ENCODE measurements at regions of chr2 and their contacts with region 1.

Region 1: GRCh38 chr2:177263451-177264208 is 897 bp downstream of the NFE2L2 start:
- DNase-seq: peak; percentile 99
- H3K4me3 ChIP-seq: peak overlapping the region; percentile 86 to 100 (median 95)
- H3K27ac ChIP-seq: peak overlapping the region; percentile 91
- H3K4me1 ChIP-seq: peaks cover 28% of the 10 kb centered on the region
- H3K27me3 ChIP-seq: no peaks in the 10 kb centered on the region
- CTCF ChIP-seq: peak; percentile 61 to 92

Region 2: GRCh38 chr2:177229448-177230242 is 34.0 kb before region 1 on chr2:
- CTCF ChIA-PET with region 1: no interaction called
- dilution Hi-C with region 1: no loop called
- in situ Hi-C with region 1: no loop called
- intact Hi-C with region 1: loop called (anchors 2 kb)
- DNase-seq: peak; percentile 81
- H3K4me3 ChIP-seq: no peak overlapping the region
- H3K27ac ChIP-seq: peak overlapping the region; percentile 54
- H3K4me1 ChIP-seq: peaks cover 6% of the 10 kb centered on the region
- H3K27me3 ChIP-seq: no peaks in the 10 kb centered on the region
- CTCF ChIP-seq: no peak

Region 3: DNA sequence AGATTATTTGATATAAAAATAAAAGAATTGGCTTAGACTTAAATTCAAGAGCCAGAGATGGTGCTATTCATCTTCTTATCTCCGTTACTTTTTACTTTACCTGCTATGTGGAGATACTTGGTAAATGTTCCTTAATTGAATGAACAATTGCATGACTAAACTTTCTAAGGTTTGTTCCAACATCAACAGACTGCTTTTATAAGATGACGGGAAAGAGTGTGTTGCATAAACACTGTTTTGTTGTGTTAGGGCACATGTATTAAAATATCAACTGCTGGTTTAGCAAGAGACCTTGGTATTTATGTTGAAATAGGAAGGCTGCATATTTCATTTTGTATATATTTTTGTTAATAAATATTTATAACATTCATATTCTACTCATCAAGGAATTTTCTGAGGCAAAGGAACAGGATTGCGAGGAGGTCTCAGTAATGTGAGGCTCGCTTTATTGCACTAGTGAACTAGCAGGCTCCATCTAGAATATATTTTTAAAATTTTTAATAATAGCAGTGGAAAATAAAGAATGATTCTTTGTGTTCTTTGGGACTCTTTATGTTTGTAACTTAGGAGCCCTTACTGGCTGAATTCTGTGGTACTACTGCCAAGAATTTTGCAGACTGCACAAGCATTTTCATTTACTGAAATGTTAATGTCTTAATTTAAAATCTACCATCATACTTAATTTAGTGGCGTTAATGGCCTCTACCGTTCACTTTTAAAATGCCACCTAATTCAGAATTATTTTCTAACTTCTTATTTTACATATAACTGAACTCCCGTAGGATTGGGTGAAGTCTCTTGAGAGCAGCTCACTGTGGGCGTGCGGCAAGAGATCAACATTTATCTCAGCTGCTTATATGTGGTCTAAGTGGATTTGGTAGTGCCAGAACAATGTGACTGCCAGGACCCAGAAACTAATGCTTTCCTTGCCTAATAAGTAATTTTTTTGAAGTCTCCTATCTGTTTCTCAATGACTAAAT is 11.7 kb after region 1 on chr2:
- CTCF ChIA-PET with region 1: no interaction called
- dilution Hi-C with region 1: no loop called
- in situ Hi-C with region 1: no loop called
- intact Hi-C with region 1: loop called (anchors 1 kb)
- DNase-seq: peak; percentile 87
- H3K4me3 ChIP-seq: peak overlapping the region in 1 of 3 experiments; percentile 36
- H3K27ac ChIP-seq: peak overlapping the region; percentile 36
- H3K4me1 ChIP-seq: peaks cover 10% of the 10 kb centered on the region
- H3K27me3 ChIP-seq: no peaks in the 10 kb centered on the region
- CTCF ChIP-seq: no peak

Region 4: DNA sequence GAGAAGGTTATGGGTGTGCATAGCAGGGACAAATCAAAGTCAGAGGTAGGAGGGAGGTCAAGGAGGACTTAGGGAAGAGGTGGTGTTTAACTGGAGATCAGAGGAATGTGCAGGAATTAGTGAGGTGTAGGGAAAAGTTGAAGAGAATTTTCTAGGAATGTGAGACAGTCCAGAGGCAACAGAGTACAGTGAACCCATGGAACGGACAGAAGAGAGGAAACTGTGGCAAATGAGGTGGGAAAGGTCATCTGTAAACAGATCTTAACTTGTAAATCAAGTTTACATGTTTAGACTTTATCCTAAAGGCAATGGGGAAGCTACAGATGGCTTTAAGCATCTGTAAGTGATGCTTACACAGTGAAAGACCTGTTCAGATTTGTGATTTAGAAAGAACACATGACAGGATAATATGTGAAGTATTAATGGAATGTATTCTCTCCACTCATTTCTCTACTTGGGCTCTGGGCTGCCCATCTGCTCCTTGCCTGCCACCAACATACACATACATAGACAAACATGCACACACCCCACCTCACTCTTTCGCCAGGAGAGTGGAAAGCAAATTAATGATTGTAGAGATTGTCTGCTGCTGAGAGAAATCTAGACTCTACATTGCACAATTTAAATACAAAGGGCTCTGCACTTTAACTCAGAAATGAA is 61.8 kb after region 1 on chr2:
- CTCF ChIA-PET with region 1: no interaction called
- dilution Hi-C with region 1: no loop called
- in situ Hi-C with region 1: loop called (anchors 5 to 10 kb)
- intact Hi-C with region 1: loop called (anchors 2 kb)
- DNase-seq: peak; percentile 46
- H3K4me3 ChIP-seq: no peak overlapping the region
- H3K27ac ChIP-seq: peak overlapping the region; percentile 1
- H3K4me1 ChIP-seq: peaks cover 46% of the 10 kb centered on the region
- H3K27me3 ChIP-seq: no peaks in the 10 kb centered on the region
- CTCF ChIP-seq: no peak

Region 5: GRCh38 chr2:177419274-177419673 is 155.6 kb after region 1 on chr2:
- CTCF ChIA-PET with region 1: no interaction called
- dilution Hi-C with region 1: no loop called
- in situ Hi-C with region 1: no loop called
- intact Hi-C with region 1: loop called (anchors 2 kb)
- DNase-seq: peak; percentile 80
- H3K4me3 ChIP-seq: peak overlapping the region in 1 of 3 experiments; percentile 37
- H3K27ac ChIP-seq: no peak overlapping the region
- H3K4me1 ChIP-seq: peaks cover 12% of the 10 kb centered on the region
- H3K27me3 ChIP-seq: no peaks in the 10 kb centered on the region
- CTCF ChIP-seq: no peak

Measured in mammary epithelial cell (primary cell).